Adrenal gland (tissue), 19 donors: ENCODE measurements at regions of chr6 and their contacts with region 1.

Region 1: GRCh38 chr6:162736961-162737360 is 9.2 kb downstream of the PACRG start:
- DNase-seq: peak in 1 of 7 donors; percentile 6
- H3K4me3 ChIP-seq: no peak overlapping the region
- H3K27ac ChIP-seq: no peak overlapping the region
- H3K4me1 ChIP-seq: no peaks in the 10 kb centered on the region
- H3K27me3 ChIP-seq: no peaks in the 10 kb centered on the region
- CTCF ChIP-seq: peak in 5 of 6 experiments; percentile 7 to 51 (median 29)
- POLR2A ChIP-seq: no peak

Region 2: GRCh38 chr6:162554531-162554930 is 182.4 kb before region 1 on chr6:
- intact Hi-C with region 1: loop called in 1 of 2 experiments (anchors 10 kb)
- DNase-seq: peak in 6 of 7 donors; percentile 18 to 56 (median 36)
- H3K4me3 ChIP-seq: no peak overlapping the region
- H3K27ac ChIP-seq: no peak overlapping the region
- H3K4me1 ChIP-seq: peaks cover 0 to 4% of the 10 kb centered on the region in 2 donors
- H3K27me3 ChIP-seq: no peaks in the 10 kb centered on the region
- CTCF ChIP-seq: no peak
- POLR2A ChIP-seq: no peak

Region 3: GRCh38 chr6:162625846-162626540 is 111.0 kb before region 1 on chr6:
- intact Hi-C with region 1: no loop called
- DNase-seq: no peak
- H3K4me3 ChIP-seq: peak overlapping the region in 1 of 4 donors; percentile 14
- H3K27ac ChIP-seq: peak overlapping the region; percentile 67 to 90 (median 79)
- H3K4me1 ChIP-seq: peaks cover 4 to 23% of the 10 kb centered on the region in 2 donors
- H3K27me3 ChIP-seq: no peaks in the 10 kb centered on the region
- CTCF ChIP-seq: no peak
- POLR2A ChIP-seq: peak in 1 of 2 donors; percentile 11

Region 4: GRCh38 chr6:162825597-162825996 is 88.6 kb after region 1 on chr6:
- intact Hi-C with region 1: no loop called
- DNase-seq: no peak
- H3K4me3 ChIP-seq: no peak overlapping the region
- H3K27ac ChIP-seq: no peak overlapping the region
- H3K4me1 ChIP-seq: peaks cover 0 to 11% of the 10 kb centered on the region in 2 donors
- H3K27me3 ChIP-seq: no peaks in the 10 kb centered on the region
- CTCF ChIP-seq: no peak
- POLR2A ChIP-seq: no peak